ENCODE measurements at regions of chr9 and their contacts with region 1.

Region 1: DNA sequence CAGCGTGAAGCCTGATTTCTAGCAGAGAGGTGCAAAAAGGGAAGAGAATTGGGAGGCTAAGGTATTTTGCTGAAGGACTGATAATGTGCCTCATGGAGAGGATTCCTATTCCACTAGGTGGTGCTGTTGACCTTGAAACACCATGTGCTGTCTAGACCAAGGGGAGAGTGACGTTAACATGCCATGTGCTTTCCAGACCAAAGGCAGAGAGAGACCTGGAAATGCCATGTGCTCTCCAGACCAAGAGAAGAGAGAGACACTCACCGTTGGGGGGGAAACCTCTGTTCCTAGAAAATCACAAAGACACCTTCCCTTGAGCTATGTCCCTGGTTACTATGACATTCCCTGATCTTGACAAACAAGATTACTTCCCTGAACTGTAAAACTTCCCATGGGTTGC is 286.0 kb upstream of the TUSC1 start:
- DNase-seq: peak; percentile 21
- H3K4me3 ChIP-seq: no peak overlapping the region
- H3K27ac ChIP-seq: no peak overlapping the region
- H3K4me1 ChIP-seq: no peaks in the 10 kb centered on the region
- H3K27me3 ChIP-seq: no peaks in the 10 kb centered on the region
- CTCF ChIP-seq: peak; percentile 57 to 75 (median 62)

Region 2: GRCh38 chr9:26326473-26327044 is 362.3 kb after region 1 on chr9:
- dilution Hi-C with region 1: loop called (anchors 25 kb)
- DNase-seq: peak; percentile 38
- H3K4me3 ChIP-seq: no peak overlapping the region
- H3K27ac ChIP-seq: no peak overlapping the region
- H3K4me1 ChIP-seq: no peaks in the 10 kb centered on the region
- H3K27me3 ChIP-seq: no peaks in the 10 kb centered on the region
- CTCF ChIP-seq: peak; percentile 74

Region 3: GRCh38 chr9:26399556-26399955 is 435.3 kb after region 1 on chr9:
- dilution Hi-C with region 1: no loop called
- DNase-seq: no peak
- H3K4me3 ChIP-seq: no peak overlapping the region
- H3K27ac ChIP-seq: no peak overlapping the region
- H3K4me1 ChIP-seq: no peaks in the 10 kb centered on the region
- H3K27me3 ChIP-seq: no peaks in the 10 kb centered on the region
- CTCF ChIP-seq: no peak